Activated T-helper 1 cell treated with anti-CD3 and anti-CD28 coated beads, Interleukin-12 subunit alpha, Interleukin-12 subunit beta, Interleukin-2, Interleukin-4 antibody, amounts not matched to agents 30 ng/mL and 10 ng/mL and 1 ng/mL, durations not matched to agents 14 hours and 24 hours and 36 hours (primary cell): ENCODE measurements at regions of chr10 and their contacts with region 1.

Region 1: GRCh38 chr10:110045772-110046171 is 38.0 kb downstream of the ADD3 start:
- DNase-seq: no peak
- H3K4me3 Mint-ChIP-seq: no peak overlapping the region
- H3K27ac Mint-ChIP-seq: peak overlapping the region; percentile 61
- H3K4me1 Mint-ChIP-seq: peaks cover 48% of the 10 kb centered on the region
- H3K27me3 Mint-ChIP-seq: no peaks in the 10 kb centered on the region

Region 2: DNA sequence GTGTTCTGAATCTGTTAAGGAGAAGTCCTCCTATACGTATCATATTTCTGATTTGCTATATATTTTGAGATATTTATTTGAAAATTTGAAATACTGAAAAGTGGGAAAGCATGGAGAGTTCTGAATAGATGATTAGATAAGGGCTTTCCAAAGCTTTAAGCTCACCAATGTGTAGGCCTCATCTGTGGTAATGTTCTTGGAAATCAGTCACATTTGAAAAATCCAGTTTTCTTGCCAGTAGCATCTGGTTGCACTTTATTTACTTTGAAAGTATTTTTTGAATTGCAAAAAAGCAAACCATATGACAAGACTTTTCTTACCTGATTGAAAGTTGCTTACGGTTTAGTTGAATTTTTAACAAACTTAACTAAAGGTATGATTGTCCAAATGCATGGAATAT is 16.3 kb before region 1 on chr10:
- intact Hi-C with region 1: loop called (anchors 1 kb)
- DNase-seq: no peak
- H3K4me3 Mint-ChIP-seq: no peak overlapping the region
- H3K27ac Mint-ChIP-seq: no peak overlapping the region
- H3K4me1 Mint-ChIP-seq: peaks cover 16% of the 10 kb centered on the region
- H3K27me3 Mint-ChIP-seq: no peaks in the 10 kb centered on the region

Region 3: DNA sequence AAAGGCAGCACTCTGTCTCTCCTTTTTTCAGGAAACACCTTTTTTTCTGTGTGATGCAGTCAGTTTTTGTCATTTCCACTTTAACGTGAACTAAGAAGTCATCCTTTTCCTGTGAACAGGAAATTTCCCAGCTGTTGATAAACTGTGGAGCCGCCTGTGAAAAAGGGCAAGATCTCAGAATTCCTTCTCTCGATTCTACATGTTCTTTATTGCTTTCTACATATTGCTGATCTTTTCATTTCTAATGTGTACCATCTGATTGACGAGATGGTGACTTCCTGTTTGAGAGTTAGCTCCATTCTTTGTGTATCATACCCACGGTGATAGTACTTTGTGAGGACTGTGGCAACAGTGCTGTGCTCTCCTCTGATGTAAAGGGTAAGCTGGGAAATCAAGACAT is 12.4 kb after region 1 on chr10:
- intact Hi-C with region 1: loop called (anchors 1 kb)
- DNase-seq: no peak
- H3K4me3 Mint-ChIP-seq: peak overlapping the region; percentile 56
- H3K27ac Mint-ChIP-seq: peak overlapping the region; percentile 76
- H3K4me1 Mint-ChIP-seq: peaks cover 80% of the 10 kb centered on the region
- H3K27me3 Mint-ChIP-seq: no peaks in the 10 kb centered on the region